ENCODE measurements at regions of chr19 and their contacts with region 1.

Region 1: GRCh38 chr19:15177269-15178116 is 23.3 kb downstream of the NOTCH3 start:
- DNase-seq: peak; percentile 95
- H3K4me3 ChIP-seq: peak overlapping the region in 1 of 2 experiments; percentile 37; a peak in 2 of 4 replicates
- H3K27ac ChIP-seq: no peak overlapping the region
- H3K4me1 ChIP-seq: peaks cover 0 to 2% of the 10 kb centered on the region in 2 experiments; a peak in 1 of 4 replicates
- H3K27me3 ChIP-seq: no peaks in the 10 kb centered on the region
- CTCF ChIP-seq: peak; percentile 77
- EP300 ChIP-seq: no peak
- RAD21 ChIP-seq: peak; percentile 87

Region 2: DNA sequence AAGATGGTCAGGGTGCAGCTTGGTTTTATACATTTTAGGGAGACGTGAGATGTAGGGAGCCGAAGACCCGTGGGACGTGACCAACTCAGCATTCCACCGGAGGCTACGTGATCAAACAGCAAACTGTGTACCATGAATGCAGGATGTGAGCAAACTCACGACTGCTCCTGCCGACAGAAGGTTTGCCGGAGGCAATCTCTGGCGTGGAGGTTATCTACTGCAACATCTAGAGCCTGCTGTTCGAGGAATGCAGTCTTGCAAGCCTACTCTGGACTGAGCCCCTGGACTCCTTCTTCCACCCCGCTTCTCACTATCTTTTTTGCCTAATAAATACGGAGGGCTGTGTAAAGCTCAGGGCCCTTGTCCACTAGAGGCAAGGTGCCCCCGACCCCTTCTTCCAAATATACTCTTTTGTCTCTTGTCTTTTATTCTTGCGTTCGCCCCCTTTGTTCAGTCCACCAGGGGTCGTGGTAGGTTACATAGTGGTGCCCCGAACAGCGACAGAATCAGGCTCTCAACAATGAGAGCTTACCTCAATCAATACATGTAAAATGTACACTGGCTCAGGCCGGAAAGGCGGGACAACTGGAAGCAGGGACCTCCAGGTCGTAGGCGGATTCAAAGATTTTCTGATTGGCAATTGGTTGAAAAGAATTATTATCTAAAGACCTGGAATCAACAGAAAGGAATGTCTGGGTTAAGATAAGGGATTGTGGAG is 104.4 kb before region 1 on chr19:
- CTCF ChIA-PET with region 1: no interaction called
- POLR2A ChIA-PET with region 1: no interaction called
- DNase-seq: no peak
- H3K4me3 ChIP-seq: no peak overlapping the region; a peak in 1 of 4 replicates
- H3K27ac ChIP-seq: no peak overlapping the region
- H3K4me1 ChIP-seq: no peaks in the 10 kb centered on the region; a peak in 1 of 4 replicates
- H3K27me3 ChIP-seq: peaks cover 14% of the 10 kb centered on the region; the same call in 1 of the 2 replicates
- CTCF ChIP-seq: peak; percentile 34
- EP300 ChIP-seq: no peak
- RAD21 ChIP-seq: 0 out of 2 replicates have a peak, but pooled peaks have one; percentile 10

Region 3: GRCh38 chr19:15101479-15102082 is 75.9 kb before region 1 on chr19:
- CTCF ChIA-PET with region 1: interaction called, 14 read pairs
- POLR2A ChIA-PET with region 1: no interaction called
- DNase-seq: peak; percentile 54
- H3K4me3 ChIP-seq: no peak overlapping the region; a peak in 1 of 4 replicates
- H3K27ac ChIP-seq: no peak overlapping the region
- H3K4me1 ChIP-seq: no peaks in the 10 kb centered on the region
- H3K27me3 ChIP-seq: peaks cover 27% of the 10 kb centered on the region; the same call in 1 of the 2 replicates
- CTCF ChIP-seq: peak; percentile 66
- EP300 ChIP-seq: no peak
- RAD21 ChIP-seq: peak; percentile 63

Region 4: GRCh38 chr19:15166700-15167099 is 10.8 kb before region 1 on chr19:
- CTCF ChIA-PET with region 1: interaction called, 19 read pairs
- POLR2A ChIA-PET with region 1: no interaction called
- DNase-seq: no peak
- H3K4me3 ChIP-seq: no peak overlapping the region
- H3K27ac ChIP-seq: no peak overlapping the region
- H3K4me1 ChIP-seq: no peaks in the 10 kb centered on the region
- H3K27me3 ChIP-seq: no peaks in the 10 kb centered on the region
- CTCF ChIP-seq: no peak
- EP300 ChIP-seq: no peak
- RAD21 ChIP-seq: no peak

Region 5: DNA sequence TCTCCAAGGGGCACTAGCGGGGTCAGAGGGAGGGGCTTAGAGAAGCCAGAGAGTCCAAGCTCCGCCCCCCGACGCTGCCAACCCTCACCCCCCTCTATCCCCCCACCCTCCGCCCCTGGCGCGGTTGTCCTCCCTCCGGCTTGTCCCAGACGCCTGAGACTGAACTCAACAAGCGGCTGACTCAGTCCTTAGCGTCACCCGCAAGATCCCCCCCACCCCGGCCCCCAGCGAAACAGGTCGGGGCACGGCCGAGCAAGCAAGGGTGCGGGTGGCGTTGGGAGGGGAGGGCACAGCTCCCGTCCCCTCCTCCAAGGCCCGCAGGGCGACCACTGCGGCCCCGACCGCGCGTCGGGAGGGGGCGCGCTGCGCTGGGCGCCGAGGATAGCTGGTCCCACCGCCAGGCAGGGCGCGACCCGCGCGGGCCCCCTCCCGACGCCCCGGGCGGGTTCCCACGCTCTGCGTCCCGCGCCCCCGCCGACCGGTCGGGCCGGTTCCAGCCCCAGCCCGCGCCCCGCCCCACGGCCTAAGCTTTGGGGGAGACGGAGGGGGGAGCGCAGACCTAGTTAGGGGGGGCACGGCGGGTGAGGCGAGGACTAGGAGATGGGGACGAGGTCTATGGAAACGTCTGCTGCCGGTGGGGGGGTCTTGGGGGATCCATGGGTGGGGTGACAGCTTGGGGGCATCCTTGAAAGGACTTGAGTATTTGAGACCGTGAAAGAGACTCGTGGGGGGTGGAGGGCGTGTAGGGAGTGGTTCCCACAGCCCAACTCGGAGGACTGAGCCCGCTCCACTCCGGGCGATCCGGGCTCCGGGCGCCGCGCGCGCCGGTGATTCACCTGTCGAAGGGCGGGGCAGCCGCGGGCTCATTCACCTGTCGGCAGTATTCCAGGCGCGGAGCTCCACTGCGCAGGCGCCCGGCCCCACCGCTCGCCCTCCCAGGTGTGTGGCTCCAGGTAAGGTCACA is 18.2 kb after region 1 on chr19:
- CTCF ChIA-PET with region 1: interaction called, 15 read pairs
- POLR2A ChIA-PET with region 1: interaction called, 3 read pairs
- DNase-seq: peak; percentile 94
- H3K4me3 ChIP-seq: peak overlapping the region; percentile 46; a peak in 3 of 4 replicates
- H3K27ac ChIP-seq: no peak overlapping the region
- H3K4me1 ChIP-seq: peaks cover 0 to 22% of the 10 kb centered on the region in 2 experiments; a peak in 1 of 4 replicates
- H3K27me3 ChIP-seq: no peaks in the 10 kb centered on the region
- CTCF ChIP-seq: no peak
- EP300 ChIP-seq: no peak
- RAD21 ChIP-seq: peak; percentile 24; the same call in 1 of the 2 replicates

Region 6: DNA sequence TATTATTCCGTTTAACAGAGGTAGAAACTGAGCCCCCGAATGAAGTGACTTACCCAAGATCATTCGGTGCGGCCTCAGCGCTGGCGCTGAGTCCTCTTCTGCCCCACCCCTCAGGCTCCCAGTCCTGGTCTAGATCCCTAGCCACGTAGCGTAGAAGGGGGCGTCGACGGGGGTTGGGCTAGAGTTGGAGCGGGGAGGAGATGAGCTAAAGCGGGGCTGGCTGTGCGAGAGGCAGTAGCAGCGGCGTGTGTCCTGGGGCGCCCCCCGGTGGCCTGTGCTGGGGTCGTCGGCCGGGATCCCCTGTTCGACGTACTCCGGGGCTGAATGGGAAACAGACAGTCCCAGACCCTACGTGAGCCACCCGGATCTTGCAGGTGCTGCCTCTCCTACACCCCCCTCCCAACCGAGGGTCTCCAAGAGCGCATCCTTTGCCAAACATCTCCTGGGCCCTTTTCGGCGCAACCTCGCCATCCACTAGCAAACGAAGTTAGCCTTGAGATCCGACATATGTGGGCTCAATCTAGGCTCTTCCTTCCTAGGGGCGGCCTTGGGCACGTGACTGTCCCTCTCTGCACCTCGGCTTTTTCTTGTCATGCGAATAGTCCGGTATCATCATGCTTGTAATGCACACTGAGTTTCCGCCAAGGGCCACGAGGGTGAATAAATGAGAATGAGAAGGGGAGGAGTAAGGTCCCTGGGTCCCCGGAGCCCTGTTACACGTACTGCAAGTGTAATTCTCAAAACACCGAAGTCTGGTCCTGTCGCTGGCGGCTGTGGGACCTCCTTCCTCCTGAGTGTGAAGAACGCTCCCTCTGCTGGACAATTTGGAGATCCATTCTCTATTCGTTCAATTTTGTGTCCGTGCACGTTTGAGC is 378.5 kb after region 1 on chr19:
- CTCF ChIA-PET with region 1: interaction called, 20 read pairs
- POLR2A ChIA-PET with region 1: no interaction called
- DNase-seq: peak; percentile 93
- H3K4me3 ChIP-seq: peak overlapping the region; percentile 9 to 45; a peak in 3 of 4 replicates
- H3K27ac ChIP-seq: no peak overlapping the region
- H3K4me1 ChIP-seq: peaks cover 0 to 4% of the 10 kb centered on the region in 2 experiments; a peak in 1 of 4 replicates
- H3K27me3 ChIP-seq: peaks cover 22% of the 10 kb centered on the region; the same call in 1 of the 2 replicates
- CTCF ChIP-seq: peak; percentile 72
- EP300 ChIP-seq: no peak
- RAD21 ChIP-seq: peak; percentile 95

Measured in SK-N-SH (cell line).